ENCODE measurements at regions of chr2 and their contacts with region 1.

Region 1: GRCh38 chr2:233480490-233481202 is 85.9 kb downstream of the USP40 start:
- DNase-seq: peak; percentile 55
- CTCF ChIP-seq: peak; percentile 38

Region 2: GRCh38 chr2:233711312-233712008 is 230.8 kb after region 1 on chr2:
- in situ Hi-C with region 1: loop called (anchors 25 kb)
- DNase-seq: peak; percentile 49
- CTCF ChIP-seq: peak; percentile 89

Region 3: DNA sequence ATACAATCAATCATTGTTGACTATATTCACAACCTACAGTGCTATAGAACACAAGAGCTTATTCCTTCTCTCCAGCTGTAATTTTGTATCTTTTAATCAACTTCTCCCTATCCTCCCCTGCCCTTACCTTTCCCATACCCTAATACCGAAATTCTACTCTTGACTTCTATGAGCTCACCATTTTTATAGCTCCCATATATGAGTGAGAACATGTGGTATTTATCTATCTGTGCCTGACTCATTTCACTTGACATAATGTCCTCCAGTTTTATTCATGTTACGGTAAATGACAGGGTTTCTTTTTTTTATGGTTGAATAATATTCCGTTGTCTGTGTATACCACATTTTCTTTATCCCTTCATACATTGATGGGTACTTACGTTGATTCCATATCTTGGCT is 300.1 kb after region 1 on chr2:
- in situ Hi-C with region 1: no loop called
- DNase-seq: no peak
- CTCF ChIP-seq: no peak